Activated CD8-positive, alpha-beta T cell treated with anti-CD3 and anti-CD28 coated beads for 36 hours (primary cell): ENCODE measurements at regions of chr14 and their contacts with region 1.

Region 1: DNA sequence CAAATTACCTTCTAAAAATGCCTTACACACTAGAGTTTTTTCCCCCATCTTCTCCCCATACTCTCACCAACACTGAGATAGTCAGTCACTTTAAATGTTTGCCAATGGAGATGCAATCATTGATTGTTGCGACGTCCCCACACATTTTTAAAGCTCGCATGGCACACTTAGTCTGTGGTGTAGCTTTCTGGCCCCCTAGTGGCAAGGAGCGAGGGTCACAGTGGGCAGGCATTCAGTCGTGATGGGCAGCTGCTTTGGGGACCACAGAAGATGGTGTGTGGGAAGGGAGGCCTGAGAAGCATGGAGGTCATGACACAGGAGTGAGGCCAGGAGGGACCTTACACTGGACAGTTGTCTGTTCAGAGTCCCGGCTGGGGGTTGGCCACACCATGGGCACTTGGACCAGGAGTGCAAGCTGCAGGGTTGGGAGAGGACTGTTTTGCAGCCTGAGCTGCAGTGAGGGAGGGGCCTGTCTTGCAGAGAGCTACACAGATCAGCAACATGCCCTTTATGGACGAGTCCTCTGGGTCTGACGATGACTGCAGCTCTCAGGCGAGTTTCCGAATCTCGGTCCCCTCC is 28.7 kb downstream of the PIGH start:
- DNase-seq: peak; percentile 84
- ATAC-seq: peak; percentile 96
- H3K4me3 Mint-ChIP-seq: no peak overlapping the region
- H3K27ac Mint-ChIP-seq: no peak overlapping the region
- H3K4me1 Mint-ChIP-seq: peaks cover 3% of the 10 kb centered on the region
- H3K27me3 Mint-ChIP-seq: no peaks in the 10 kb centered on the region
- CTCF ChIP-seq: peak; percentile 83

Region 2: DNA sequence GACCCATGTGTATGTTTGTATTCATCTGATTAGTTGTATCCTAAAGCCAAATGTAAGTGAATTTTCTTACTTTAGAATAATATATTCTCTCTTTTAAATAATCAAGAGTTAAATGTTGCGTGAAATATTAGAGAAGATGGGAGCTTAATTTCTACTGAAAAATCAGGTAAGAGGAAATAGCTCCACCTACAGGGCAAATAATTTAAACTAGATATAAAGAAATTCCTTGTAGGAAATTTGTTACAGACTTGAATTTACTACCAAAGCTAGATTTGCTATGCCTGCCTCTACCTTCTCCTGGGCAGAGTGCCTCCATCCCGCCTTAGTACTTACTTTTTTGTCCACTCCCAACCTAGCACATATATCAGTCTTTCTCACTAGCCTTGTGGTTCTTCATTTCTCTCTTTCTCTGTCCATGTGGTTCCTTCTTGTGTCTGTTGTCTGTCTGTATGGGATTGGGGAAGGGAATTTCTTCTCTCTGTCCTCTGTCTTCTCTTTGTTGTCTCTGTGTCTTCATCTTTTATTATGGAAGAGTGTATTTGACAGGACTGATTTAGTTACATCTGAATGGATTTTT is 285.4 kb before region 1 on chr14:
- CTCF ChIA-PET with region 1: no interaction called
- POLR2A ChIA-PET with region 1: no interaction called
- intact Hi-C with region 1: no loop called
- DNase-seq: no peak
- ATAC-seq: no peak
- H3K4me3 Mint-ChIP-seq: no peak overlapping the region
- H3K27ac Mint-ChIP-seq: no peak overlapping the region
- H3K4me1 Mint-ChIP-seq: no peaks in the 10 kb centered on the region
- H3K27me3 Mint-ChIP-seq: no peaks in the 10 kb centered on the region
- CTCF ChIP-seq: peak; percentile 82

Region 3: DNA sequence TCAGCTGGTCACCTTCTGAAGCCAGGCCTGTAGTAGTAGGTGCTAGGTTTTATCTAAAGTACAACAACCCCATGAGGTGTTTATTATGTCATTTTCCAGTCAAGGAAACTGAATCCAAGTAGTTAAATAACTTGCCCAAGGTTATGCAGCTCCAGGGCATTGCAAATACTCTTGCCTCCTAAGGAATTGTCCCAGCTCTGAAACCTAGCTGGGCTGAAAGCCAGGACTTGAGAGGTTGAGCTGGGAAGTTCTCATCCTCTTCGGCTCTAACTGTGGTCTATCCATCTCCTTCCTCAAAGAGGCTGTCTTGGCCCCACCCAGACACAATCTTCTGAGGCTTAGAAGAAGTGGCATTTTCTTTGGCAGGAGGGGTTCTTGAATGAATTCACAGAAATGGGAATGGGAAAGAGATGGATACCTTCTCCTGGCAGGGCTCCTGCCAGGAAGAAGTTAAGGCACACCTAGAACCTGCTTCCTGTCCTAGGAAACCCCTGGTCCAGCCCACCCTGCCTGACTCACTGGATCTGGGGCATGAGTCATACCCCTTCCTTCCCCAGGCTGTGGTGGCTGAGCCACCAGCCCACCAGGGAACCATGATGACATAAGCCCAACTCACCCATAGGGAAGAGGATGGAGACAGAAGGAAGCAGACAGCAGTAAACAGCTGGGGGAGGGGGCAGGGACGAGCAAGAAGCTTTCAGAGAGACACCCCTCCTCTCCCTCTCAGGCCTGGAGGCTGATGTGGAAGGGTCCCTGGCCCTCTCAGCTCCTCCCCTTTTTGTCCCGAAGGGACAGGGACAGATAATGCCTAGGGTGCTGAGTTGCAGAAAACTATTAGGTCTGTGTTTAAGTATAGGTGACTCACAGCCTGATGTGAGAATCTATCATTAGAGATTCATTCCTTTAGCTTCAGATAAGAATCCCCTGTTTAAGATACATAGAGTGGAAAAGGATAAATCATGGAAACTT is 157.3 kb before region 1 on chr14:
- CTCF ChIA-PET with region 1: interaction called, 13 read pairs
- POLR2A ChIA-PET with region 1: no interaction called
- intact Hi-C with region 1: no loop called
- DNase-seq: peak; percentile 62
- ATAC-seq: peak; percentile 86
- H3K4me3 Mint-ChIP-seq: no peak overlapping the region
- H3K27ac Mint-ChIP-seq: no peak overlapping the region
- H3K4me1 Mint-ChIP-seq: peaks cover 14% of the 10 kb centered on the region
- H3K27me3 Mint-ChIP-seq: peaks cover 17% of the 10 kb centered on the region
- CTCF ChIP-seq: no peak

Region 4: GRCh38 chr14:67487937-67488893 is 83.1 kb before region 1 on chr14 and contains the start of gene TMEM229B:
- CTCF ChIA-PET with region 1: interaction called, 13 read pairs
- POLR2A ChIA-PET with region 1: interaction called, 3 read pairs
- intact Hi-C with region 1: no loop called
- DNase-seq: peak; percentile 91
- ATAC-seq: peak; percentile 96
- H3K4me3 Mint-ChIP-seq: peak within 1 kb of the TSS; percentile 76
- H3K27ac Mint-ChIP-seq: peak within 1 kb of the TSS; percentile 95
- H3K4me1 Mint-ChIP-seq: peaks cover 64% of the 10 kb centered on the region
- H3K27me3 Mint-ChIP-seq: no peaks in the 10 kb centered on the region
- CTCF ChIP-seq: no peak
- total RNA-seq, gene TMEM229B: 1.6 to 2.3 TPM

Region 5: DNA sequence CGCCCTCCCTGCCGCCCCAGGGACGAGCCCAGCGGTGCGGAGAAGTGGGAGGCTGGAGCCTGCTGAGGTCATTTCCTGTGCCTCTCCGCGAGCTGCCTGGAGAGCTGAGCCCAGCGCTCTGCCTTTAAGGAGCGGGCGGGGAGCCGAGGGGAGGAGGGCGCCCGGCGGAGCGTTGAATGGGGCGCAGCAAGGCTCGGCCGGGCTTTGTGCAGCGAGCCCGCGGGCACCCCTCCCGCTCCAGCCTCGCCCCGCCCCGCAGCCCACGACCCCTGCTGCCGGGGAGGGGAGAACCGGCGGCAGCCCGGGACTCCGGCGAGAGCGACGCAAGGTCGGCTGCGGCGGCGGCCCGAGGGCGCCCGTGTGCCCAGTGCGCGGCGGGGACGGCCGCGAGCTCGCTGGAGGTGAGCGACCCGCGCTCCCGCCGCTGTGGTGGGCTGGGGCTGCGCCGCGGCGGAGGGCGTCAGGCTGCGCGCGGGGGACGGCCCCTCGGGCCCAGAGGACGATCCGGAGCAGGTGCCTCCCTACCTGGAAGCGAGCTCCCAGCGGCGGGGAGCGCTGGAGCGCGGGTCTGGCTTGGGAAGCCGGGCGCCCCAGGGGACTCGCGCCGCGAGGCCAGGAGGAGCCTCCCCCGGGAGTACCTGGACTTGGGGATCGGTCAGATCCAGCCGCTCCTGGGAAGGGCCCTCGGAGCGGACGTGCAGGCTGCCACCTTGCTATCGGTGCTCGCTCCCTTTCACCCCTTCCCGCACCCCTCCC is 38.2 kb before region 1 on chr14 and contains the start of gene PLEKHH1:
- CTCF ChIA-PET with region 1: interaction called, 104 read pairs
- POLR2A ChIA-PET with region 1: interaction called, 3 read pairs
- intact Hi-C with region 1: loop called (anchors 5 kb)
- DNase-seq: peak; percentile 77
- ATAC-seq: peak; percentile 99
- H3K4me3 Mint-ChIP-seq: peak within 1 kb of the TSS; percentile 54
- H3K27ac Mint-ChIP-seq: no peak within 1 kb of the TSS
- H3K4me1 Mint-ChIP-seq: peaks cover 2% of the 10 kb centered on the region
- H3K27me3 Mint-ChIP-seq: peaks cover 21% of the 10 kb centered on the region
- CTCF ChIP-seq: no peak
- total RNA-seq, gene PLEKHH1: 4.8 to 6.7 TPM

Region 6: GRCh38 chr14:67583711-67584644 is 12.6 kb after region 1 on chr14:
- CTCF ChIA-PET with region 1: interaction called, 34 read pairs
- POLR2A ChIA-PET with region 1: no interaction called
- intact Hi-C with region 1: no loop called
- DNase-seq: peak; percentile 39
- ATAC-seq: peak; percentile 80
- H3K4me3 Mint-ChIP-seq: no peak overlapping the region
- H3K27ac Mint-ChIP-seq: no peak overlapping the region
- H3K4me1 Mint-ChIP-seq: no peaks in the 10 kb centered on the region
- H3K27me3 Mint-ChIP-seq: no peaks in the 10 kb centered on the region
- CTCF ChIP-seq: peak; percentile 51